ENCODE measurements at regions of chr17 and their contacts with region 1.

Region 1: DNA sequence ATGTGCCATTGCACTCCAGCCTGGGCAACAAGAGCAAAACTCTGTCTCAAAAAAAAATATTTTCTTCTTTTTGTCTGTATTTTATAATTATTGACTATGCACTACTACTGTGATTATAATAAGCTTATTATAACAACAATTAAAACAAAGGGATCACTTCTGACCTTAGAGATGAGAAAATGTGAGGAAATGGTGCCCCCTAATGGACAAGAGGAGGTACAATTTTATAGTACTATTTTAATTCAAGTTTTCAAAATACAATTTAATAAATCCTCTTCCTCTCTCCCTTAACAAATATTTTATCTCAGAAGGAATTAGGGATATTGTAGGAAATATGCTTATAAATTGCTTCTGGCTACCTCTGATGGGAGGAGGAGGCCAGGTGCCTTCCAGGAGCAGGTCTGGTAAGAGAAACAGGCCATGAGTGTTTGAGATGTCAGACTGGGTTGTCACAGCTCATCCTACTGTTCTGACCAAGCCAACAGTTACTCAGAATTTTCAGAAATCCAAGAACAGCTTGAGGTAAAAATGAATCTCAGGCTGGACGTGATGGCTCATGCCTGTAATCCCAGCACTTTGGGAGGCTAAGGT is 14.0 kb downstream of the VPS53 start:
- DNase-seq: no peak
- H3K4me3 ChIP-seq: no peak overlapping the region
- H3K27ac ChIP-seq: no peak overlapping the region
- H3K4me1 ChIP-seq: no peaks in the 10 kb centered on the region
- H3K27me3 ChIP-seq: no peaks in the 10 kb centered on the region
- CTCF ChIP-seq: peak in 2 of 3 experiments; percentile 8 to 25; a peak in 2 of 4 replicates
- EP300 ChIP-seq: no peak
- POLR2A ChIP-seq: no peak
- RAD21 ChIP-seq: peak in 1 of 2 experiments; percentile 68; a peak in 3 of 4 replicates

Region 2: GRCh38 chr17:416293-417206 is 284.0 kb before region 1 on chr17:
- CTCF ChIA-PET with region 1: interaction called, 73 read pairs
- POLR2A ChIA-PET with region 1: no interaction called
- DNase-seq: no peak
- H3K4me3 ChIP-seq: no peak overlapping the region
- H3K27ac ChIP-seq: no peak overlapping the region
- H3K4me1 ChIP-seq: no peaks in the 10 kb centered on the region
- H3K27me3 ChIP-seq: no peaks in the 10 kb centered on the region
- CTCF ChIP-seq: no peak
- EP300 ChIP-seq: no peak
- POLR2A ChIP-seq: no peak
- RAD21 ChIP-seq: 0 out of 4 replicates have a peak, but pooled peaks of 1 of the 2 experiments have one; percentile 2

Region 3: DNA sequence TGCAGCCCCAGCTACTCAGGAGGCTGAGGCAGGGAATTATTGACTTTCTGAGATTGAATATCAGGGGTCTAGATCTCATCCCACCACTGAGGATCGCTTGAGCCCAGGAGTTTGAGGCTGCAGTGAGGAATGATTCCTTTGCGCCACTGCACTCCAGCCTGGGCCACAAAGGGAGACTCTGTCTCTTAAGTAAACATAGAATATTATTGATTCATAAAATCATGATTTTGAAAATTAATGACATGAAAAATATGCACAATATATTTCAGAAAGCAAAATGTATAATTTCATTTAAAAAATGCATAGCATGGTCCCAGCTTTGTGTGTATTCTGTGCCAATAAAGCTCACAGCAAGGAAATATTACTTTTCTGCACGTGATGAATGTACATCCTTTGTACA is 15.6 kb after region 1 on chr17:
- CTCF ChIA-PET with region 1: interaction called, 27 read pairs
- POLR2A ChIA-PET with region 1: interaction called, 3 read pairs
- DNase-seq: no peak
- H3K4me3 ChIP-seq: no peak overlapping the region
- H3K27ac ChIP-seq: no peak overlapping the region
- H3K4me1 ChIP-seq: no peaks in the 10 kb centered on the region
- H3K27me3 ChIP-seq: no peaks in the 10 kb centered on the region
- CTCF ChIP-seq: no peak
- EP300 ChIP-seq: no peak
- POLR2A ChIP-seq: no peak
- RAD21 ChIP-seq: no peak

Region 4: GRCh38 chr17:773467-774312 is 73.1 kb after region 1 on chr17:
- CTCF ChIA-PET with region 1: no interaction called
- POLR2A ChIA-PET with region 1: no interaction called
- DNase-seq: no peak
- H3K4me3 ChIP-seq: no peak overlapping the region
- H3K27ac ChIP-seq: no peak overlapping the region
- H3K4me1 ChIP-seq: no peaks in the 10 kb centered on the region
- H3K27me3 ChIP-seq: no peaks in the 10 kb centered on the region
- CTCF ChIP-seq: no peak
- EP300 ChIP-seq: no peak
- POLR2A ChIP-seq: no peak
- RAD21 ChIP-seq: no peak

Region 5: GRCh38 chr17:988561-988960 is 288.0 kb after region 1 on chr17:
- CTCF ChIA-PET with region 1: no interaction called
- POLR2A ChIA-PET with region 1: no interaction called
- DNase-seq: no peak
- H3K4me3 ChIP-seq: no peak overlapping the region
- H3K27ac ChIP-seq: no peak overlapping the region
- H3K4me1 ChIP-seq: no peaks in the 10 kb centered on the region
- H3K27me3 ChIP-seq: no peaks in the 10 kb centered on the region
- CTCF ChIP-seq: no peak
- EP300 ChIP-seq: no peak
- POLR2A ChIP-seq: no peak
- RAD21 ChIP-seq: no peak

Measured in H1 (cell line).